A549 (cell line): ENCODE measurements at regions of chr17 and their contacts with region 1.

Region 1: DNA sequence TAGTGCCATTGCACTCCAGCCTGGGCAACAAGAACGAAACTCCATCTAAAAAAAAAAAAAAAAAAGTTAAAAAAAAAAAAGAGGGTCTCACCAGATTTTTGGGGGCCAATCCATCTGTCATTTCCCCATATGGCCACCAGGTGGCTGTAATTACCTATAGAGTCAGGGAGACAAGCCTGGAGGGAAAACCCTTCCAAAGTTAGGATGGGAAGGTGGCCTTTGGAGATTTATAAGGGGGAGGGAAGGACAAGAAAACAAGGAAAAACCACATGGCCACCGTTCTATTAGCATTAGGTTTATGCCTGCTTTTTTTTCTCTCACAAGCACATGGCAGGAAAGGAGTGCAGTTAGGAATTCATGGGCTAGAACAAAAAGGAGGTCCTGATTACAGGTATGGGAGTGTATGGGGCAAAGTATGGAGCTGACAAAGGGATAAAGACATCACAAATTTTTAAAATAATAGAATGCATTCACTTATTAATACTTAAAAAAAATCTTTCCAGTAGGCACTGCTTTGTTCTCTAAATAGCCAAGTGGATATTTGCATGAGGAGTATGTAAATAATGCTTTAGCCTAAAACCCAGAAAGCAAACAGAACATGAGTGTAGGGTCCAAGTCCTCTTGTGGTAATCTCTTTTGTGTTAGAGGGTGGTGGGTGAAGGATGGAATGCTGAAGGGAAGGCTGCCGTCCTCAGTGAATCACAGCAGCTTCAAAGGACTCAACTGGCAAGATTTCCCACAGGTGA is 5.1 kb downstream of the CYB5D1 start:
- DNase-seq: peak; percentile 65 to 66
- ATAC-seq: no peak
- H3K4me3 ChIP-seq: no peak overlapping the region
- H3K27ac ChIP-seq: no peak overlapping the region
- H3K4me1 ChIP-seq: peaks cover 15% of the 10 kb centered on the region
- CTCF ChIP-seq: peak; percentile 96
- EP300 ChIP-seq: no peak
- POLR2A ChIP-seq: no peak
- RAD21 ChIP-seq: peak; percentile 94 to 97

Region 2: DNA sequence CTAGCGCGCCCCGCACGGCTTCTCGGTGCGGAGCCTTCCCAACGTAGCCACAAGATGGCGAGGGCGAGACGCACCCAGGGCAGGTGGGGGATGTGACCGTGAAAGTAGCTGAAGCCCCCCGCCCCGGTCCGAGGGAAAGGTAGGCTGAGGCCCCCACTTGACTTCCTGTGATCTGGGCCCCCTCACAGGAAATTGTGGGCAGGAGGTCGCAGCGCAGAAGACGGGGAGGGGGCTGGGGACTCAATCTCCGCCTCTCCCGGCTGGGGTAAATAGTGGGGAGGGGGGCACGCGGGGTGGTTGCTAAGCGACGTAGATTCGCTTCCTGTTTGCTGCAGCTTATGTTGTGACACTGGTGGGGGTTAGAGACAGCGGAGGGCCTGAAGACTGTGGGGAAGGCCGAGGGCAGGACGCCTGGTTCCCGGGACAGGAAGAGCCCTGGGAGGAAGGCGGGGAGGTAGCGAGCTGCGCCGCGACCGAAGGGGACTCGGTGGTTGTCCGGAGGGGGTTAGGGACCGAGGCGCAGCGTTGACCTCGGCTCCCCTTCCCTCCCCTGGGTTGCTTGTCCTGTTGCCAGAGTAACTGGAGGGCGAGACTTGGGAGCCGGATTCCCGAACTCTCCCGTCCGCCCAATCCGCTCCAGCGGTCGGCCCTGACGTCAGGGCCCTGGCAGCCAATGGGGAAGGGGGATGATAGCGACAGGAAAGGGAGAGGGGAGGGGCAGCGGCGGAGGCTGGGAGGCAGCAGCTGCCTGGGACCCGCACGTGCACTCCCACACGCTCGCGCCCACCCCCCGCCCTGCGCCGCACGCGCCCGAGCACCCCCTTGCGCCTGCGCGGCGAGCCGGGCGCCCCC is 27.7 kb before region 1 on chr17:
- CTCF ChIA-PET with region 1: interaction called, 42 read pairs
- POLR2A ChIA-PET with region 1: interaction called, 65 read pairs
- DNase-seq: peak; percentile 99
- ATAC-seq: peak; percentile 58 to 73
- H3K4me3 ChIP-seq: peak overlapping the region; percentile 60
- H3K27ac ChIP-seq: peak overlapping the region; percentile 82 to 89
- H3K4me1 ChIP-seq: peaks cover 36% of the 10 kb centered on the region
- CTCF ChIP-seq: peak; percentile 87
- EP300 ChIP-seq: no peak
- POLR2A ChIP-seq: peak; percentile 39
- RAD21 ChIP-seq: peak; percentile 83 to 88

Region 3: GRCh38 chr17:7844292-7845154 is 18.3 kb before region 1 on chr17:
- CTCF ChIA-PET with region 1: interaction called, 29 read pairs
- POLR2A ChIA-PET with region 1: interaction called, 65 read pairs
- DNase-seq: peak; percentile 95 to 97
- ATAC-seq: peak; percentile 55 to 82
- H3K4me3 ChIP-seq: peak overlapping the region; percentile 80
- H3K27ac ChIP-seq: peak overlapping the region; percentile 96
- H3K4me1 ChIP-seq: peaks cover 28% of the 10 kb centered on the region
- CTCF ChIP-seq: no peak
- EP300 ChIP-seq: no peak
- POLR2A ChIP-seq: peak; percentile 40; the same call in 1 of the 2 replicates
- RAD21 ChIP-seq: no peak; a peak in 1 of 5 replicates

Region 4: GRCh38 chr17:7873051-7873450 is 10.2 kb after region 1 on chr17:
- CTCF ChIA-PET with region 1: interaction called, 108 read pairs
- POLR2A ChIA-PET with region 1: interaction called, 3 read pairs
- DNase-seq: no peak
- ATAC-seq: peak in 1 of 2 experiments; percentile 23; a peak in 1 of 6 replicates
- H3K4me3 ChIP-seq: no peak overlapping the region
- H3K27ac ChIP-seq: no peak overlapping the region
- H3K4me1 ChIP-seq: no peaks in the 10 kb centered on the region
- CTCF ChIP-seq: no peak
- EP300 ChIP-seq: no peak
- POLR2A ChIP-seq: no peak
- RAD21 ChIP-seq: no peak

Region 5: GRCh38 chr17:7887482-7888183 is 24.8 kb after region 1 on chr17:
- CTCF ChIA-PET with region 1: interaction called, 15 read pairs
- POLR2A ChIA-PET with region 1: no interaction called
- DNase-seq: peak; percentile 96 to 98
- ATAC-seq: peak; percentile 70 to 89
- H3K4me3 ChIP-seq: peak overlapping the region; percentile 70
- H3K27ac ChIP-seq: peak overlapping the region; percentile 98
- H3K4me1 ChIP-seq: peaks cover 35% of the 10 kb centered on the region
- CTCF ChIP-seq: no peak
- EP300 ChIP-seq: no peak
- POLR2A ChIP-seq: peak; percentile 75
- RAD21 ChIP-seq: 0 out of 5 replicates have a peak, but pooled peaks of 1 of the 2 experiments have one; percentile 0

Region 6: GRCh38 chr17:7931709-7932482 is 69.0 kb after region 1 on chr17 and contains the starts of genes CNTROB and TRAPPC1:
- CTCF ChIA-PET with region 1: interaction called, 11 read pairs
- POLR2A ChIA-PET with region 1: no interaction called
- DNase-seq: peak; percentile 99 to 100
- ATAC-seq: peak; percentile 86 to 94
- H3K4me3 ChIP-seq: peak within 1 kb of the TSS; percentile 69
- H3K27ac ChIP-seq: peak within 1 kb of the TSS; percentile 86 to 89
- H3K4me1 ChIP-seq: peaks cover 21% of the 10 kb centered on the region
- CTCF ChIP-seq: no peak
- EP300 ChIP-seq: no peak
- POLR2A ChIP-seq: peak; percentile 72
- RAD21 ChIP-seq: no peak
- polyA plus RNA-seq, gene CNTROB: 23.2 and 28.3 TPM in 2 replicates
- polyA plus RNA-seq, gene TRAPPC1: 200 and 204 TPM in 2 replicates

Region 7: GRCh38 chr17:7950578-7950977 is 87.7 kb after region 1 on chr17:
- CTCF ChIA-PET with region 1: no interaction called
- POLR2A ChIA-PET with region 1: no interaction called
- DNase-seq: no peak
- ATAC-seq: no peak
- H3K4me3 ChIP-seq: no peak overlapping the region
- H3K27ac ChIP-seq: no peak overlapping the region
- H3K4me1 ChIP-seq: no peaks in the 10 kb centered on the region
- CTCF ChIP-seq: no peak
- EP300 ChIP-seq: no peak
- POLR2A ChIP-seq: no peak
- RAD21 ChIP-seq: no peak